A673 (cell line): ENCODE measurements at regions of chr7 and their contacts with region 1.

Region 1: DNA sequence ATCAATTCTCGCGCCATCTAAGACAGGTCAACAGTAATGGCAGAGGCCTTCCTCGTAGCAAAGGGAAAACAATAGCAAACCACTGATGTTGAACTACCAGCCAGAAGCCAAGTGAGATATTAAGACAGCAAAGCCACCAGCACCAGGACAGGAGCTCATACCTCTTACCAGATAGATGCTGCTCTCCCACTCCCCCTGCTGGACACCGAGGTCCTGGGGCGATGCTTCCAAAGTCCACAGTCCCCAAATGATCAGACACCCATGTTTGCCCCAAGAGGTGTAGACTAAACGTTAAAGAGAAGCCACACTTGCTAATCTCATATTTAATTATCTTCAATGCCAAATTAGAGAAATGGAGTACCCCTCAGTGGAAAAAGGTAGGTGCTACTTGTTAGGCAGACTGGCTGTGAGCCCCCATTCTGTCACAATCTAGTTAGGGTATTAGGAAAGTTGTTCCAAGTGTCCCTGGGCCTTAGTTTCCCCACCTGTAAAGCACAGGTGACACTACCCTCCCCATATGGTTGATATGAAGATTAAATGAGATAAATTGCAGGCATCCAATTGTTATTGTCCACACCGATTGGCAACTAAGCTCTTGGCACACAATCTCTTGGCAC is 39.9 kb downstream of the TOMM7 start:
- DNase-seq: peak; percentile 72
- H3K4me3 ChIP-seq: no peak overlapping the region
- H3K27ac ChIP-seq: no peak overlapping the region
- H3K4me1 ChIP-seq: no peaks in the 10 kb centered on the region
- H3K27me3 ChIP-seq: no peaks in the 10 kb centered on the region
- CTCF ChIP-seq: peak; percentile 91

Region 2: DNA sequence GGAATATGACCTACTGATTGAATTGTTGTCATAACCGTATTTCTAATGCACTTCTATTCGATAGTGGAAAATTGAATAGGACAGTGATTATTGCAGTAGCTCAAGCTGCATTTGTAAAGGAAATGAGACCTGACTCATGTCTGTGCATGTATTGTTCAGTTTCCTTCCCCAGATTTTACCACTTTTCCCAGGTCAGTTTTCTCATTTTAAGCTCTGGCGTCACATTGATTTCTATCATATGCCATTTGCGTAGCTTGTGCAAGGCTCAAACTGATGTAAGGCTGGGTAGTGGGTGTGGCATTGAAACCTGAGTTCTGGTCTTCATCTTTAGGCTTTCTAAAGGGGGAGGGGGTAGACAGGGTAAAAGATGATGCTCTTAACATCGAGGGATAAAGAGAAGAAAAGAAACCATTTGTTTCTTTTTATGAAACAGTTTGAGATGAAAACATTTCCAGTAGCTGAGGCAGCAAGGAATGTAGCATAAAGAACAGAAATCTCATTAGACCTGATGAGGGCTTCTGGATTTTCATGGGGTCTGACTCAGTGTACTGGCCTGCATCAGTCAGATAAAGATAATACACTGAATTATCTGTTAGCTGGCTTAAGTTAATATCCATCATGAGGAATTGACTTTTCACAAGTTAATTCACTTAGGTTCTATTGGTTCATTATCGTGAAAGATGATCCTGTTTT is 654.7 kb before region 1 on chr7:
- CTCF ChIA-PET with region 1: no interaction called
- POLR2A ChIA-PET with region 1: no interaction called
- intact Hi-C with region 1: no loop called
- DNase-seq: peak; percentile 82
- H3K4me3 ChIP-seq: no peak overlapping the region
- H3K27ac ChIP-seq: peak overlapping the region; percentile 53
- H3K4me1 ChIP-seq: peaks cover 90% of the 10 kb centered on the region
- H3K27me3 ChIP-seq: no peaks in the 10 kb centered on the region
- CTCF ChIP-seq: no peak

Region 3: GRCh38 chr7:22559829-22560489 is 222.8 kb before region 1 on chr7:
- CTCF ChIA-PET with region 1: interaction called, 12 read pairs
- POLR2A ChIA-PET with region 1: no interaction called
- intact Hi-C with region 1: loop called (anchors 1 kb)
- DNase-seq: peak; percentile 84
- H3K4me3 ChIP-seq: no peak overlapping the region
- H3K27ac ChIP-seq: no peak overlapping the region
- H3K4me1 ChIP-seq: no peaks in the 10 kb centered on the region
- H3K27me3 ChIP-seq: no peaks in the 10 kb centered on the region
- CTCF ChIP-seq: peak; percentile 94

Region 4: GRCh38 chr7:22802426-22802825 is 19.7 kb after region 1 on chr7:
- CTCF ChIA-PET with region 1: interaction called, 8 read pairs
- POLR2A ChIA-PET with region 1: interaction called, 11 read pairs
- intact Hi-C with region 1: no loop called
- DNase-seq: peak; percentile 71
- H3K4me3 ChIP-seq: no peak overlapping the region
- H3K27ac ChIP-seq: no peak overlapping the region
- H3K4me1 ChIP-seq: peaks cover 17% of the 10 kb centered on the region
- H3K27me3 ChIP-seq: no peaks in the 10 kb centered on the region
- CTCF ChIP-seq: no peak